ENCODE measurements at regions of chr1 and their contacts with region 1.

Region 1: GRCh38 chr1:115624859-115625258 is 16.9 kb upstream of the VANGL1 start:
- DNase-seq: no peak
- ATAC-seq: peak; percentile 74
- H3K4me3 ChIP-seq: no peak overlapping the region
- H3K27ac ChIP-seq: no peak overlapping the region
- H3K4me1 ChIP-seq: peaks cover 4% of the 10 kb centered on the region
- H3K27me3 ChIP-seq: no peaks in the 10 kb centered on the region
- CTCF ChIP-seq: peak; percentile 21; the same call in 1 of the 2 replicates
- EP300 ChIP-seq: no peak
- POLR2A ChIP-seq: no peak
- RAD21 ChIP-seq: no peak

Region 2: DNA sequence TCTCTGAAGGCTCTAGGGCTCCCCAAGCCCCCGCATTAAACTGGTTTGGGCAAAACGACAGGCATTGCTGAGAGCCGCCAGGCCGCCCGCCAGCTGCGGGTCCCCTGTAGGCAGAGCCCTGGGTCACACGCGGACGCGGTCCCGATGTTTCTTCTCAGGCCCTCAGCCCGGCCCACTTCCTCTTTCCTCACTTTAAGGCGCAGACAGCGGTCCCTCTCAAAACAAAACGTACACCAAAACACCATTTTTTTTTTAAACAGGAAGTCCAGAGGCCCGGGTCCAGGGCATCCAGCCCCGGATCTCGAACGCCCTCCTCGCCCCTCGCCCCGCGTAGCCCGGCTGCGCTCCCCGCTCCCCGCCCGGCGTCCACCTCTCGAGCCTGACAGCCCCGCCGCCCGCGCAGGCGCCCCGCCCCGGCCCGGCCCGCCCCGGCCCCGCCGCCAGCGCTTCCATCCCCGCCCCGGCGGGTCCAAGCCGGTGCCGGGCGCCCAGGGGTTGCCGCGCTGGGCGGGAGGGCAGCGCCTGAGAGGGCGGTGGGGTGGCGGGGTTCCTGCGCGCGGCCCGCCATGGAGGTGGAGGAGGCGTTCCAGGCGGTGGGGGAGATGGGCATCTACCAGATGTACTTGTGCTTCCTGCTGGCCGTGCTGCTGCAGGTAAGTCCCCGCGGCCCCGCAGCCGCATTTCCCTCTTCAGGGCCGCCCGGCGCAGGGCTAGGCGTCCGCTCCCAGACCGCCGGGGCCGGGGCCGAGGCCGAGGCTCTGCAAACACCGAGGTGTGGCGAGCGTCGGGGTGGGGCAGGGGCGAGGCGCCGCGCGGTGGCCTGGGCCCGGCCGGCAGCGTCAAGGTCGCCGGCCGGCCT is 351.4 kb after region 1 on chr1 and contains the start of gene SLC22A15:
- CTCF ChIA-PET with region 1: no interaction called
- POLR2A ChIA-PET with region 1: no interaction called
- in situ Hi-C with region 1: loop called (anchors 25 kb)
- intact Hi-C with region 1: no loop called
- DNase-seq: no peak
- ATAC-seq: peak; percentile 74
- H3K4me3 ChIP-seq: peak within 1 kb of the TSS; percentile 41 to 67 (median 49)
- H3K27ac ChIP-seq: no peak within 1 kb of the TSS
- H3K4me1 ChIP-seq: peaks cover 25% of the 10 kb centered on the region
- H3K27me3 ChIP-seq: peaks cover 0 to 19% of the 10 kb centered on the region in 2 experiments; a peak in 3 of 5 replicates
- CTCF ChIP-seq: no peak
- EP300 ChIP-seq: no peak
- POLR2A ChIP-seq: no peak
- RAD21 ChIP-seq: no peak
- total RNA-seq, gene SLC22A15: 0.24 and 0.27 TPM in 2 replicates

Measured in HepG2 (cell line).